ENCODE measurements at regions of chr7 and their contacts with region 1.

Region 1: GRCh38 chr7:86469680-86470295 is 173.9 kb upstream of the GRM3 start:
- H3K4me3 Mint-ChIP-seq: no peak overlapping the region
- H3K27ac Mint-ChIP-seq: no peak overlapping the region
- H3K4me1 Mint-ChIP-seq: no peaks in the 10 kb centered on the region
- H3K27me3 Mint-ChIP-seq: no peaks in the 10 kb centered on the region

Region 2: DNA sequence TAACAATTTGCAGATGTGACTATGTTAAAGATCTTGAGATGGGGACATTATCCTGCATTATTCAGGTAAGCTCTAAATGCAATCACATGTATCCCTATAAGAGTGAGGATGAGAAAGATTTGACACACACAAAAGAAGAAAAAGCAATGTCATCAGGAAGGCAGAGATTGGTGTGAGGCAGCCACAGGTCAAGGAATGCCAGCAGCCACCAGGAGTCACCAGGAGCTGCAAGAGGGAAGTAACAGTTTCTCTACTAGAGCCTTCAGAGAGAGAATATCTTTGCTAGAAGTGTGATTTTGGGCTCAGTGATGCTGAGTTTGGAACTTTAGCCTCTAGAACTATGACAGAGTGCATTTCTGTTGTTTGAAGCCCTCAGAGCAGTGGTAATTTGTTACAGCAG is 582.7 kb before region 1 on chr7:
- intact Hi-C with region 1: loop called (anchors 5 kb)
- H3K4me3 Mint-ChIP-seq: no peak overlapping the region
- H3K27ac Mint-ChIP-seq: no peak overlapping the region
- H3K4me1 Mint-ChIP-seq: no peaks in the 10 kb centered on the region
- H3K27me3 Mint-ChIP-seq: no peaks in the 10 kb centered on the region

Region 3: DNA sequence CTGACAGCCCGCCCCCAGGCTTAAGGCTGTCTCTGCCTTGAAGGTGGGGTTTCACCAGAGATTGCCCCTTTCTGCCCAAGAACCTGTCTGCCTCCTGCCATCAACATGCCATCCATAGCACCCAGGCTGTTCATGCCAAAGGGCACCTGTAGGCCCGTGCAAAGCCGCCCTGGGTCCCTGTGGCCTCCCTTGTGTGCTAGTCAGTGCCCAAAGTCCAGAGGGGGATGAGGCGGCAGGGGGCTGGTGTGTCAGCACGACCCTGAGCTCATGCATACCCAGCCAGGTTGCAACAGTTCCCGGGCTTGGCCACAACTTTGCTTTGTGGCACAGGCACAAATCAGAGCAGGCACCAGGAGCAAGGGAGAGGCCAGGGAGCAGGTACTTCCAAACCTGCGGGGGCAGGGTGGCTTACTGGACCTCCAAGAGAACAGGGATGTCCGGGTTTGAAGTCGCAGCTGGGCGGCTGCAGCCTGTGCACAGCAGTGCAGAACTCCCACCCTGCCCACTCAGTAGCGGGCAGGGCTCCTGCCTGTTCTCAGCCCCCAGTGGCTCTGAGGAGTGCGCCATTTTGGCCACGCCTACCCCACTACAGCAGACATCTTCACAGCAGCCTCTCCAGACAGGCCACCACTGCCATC is 497.2 kb before region 1 on chr7:
- intact Hi-C with region 1: no loop called
- H3K4me3 Mint-ChIP-seq: no peak overlapping the region
- H3K27ac Mint-ChIP-seq: no peak overlapping the region
- H3K4me1 Mint-ChIP-seq: no peaks in the 10 kb centered on the region
- H3K27me3 Mint-ChIP-seq: no peaks in the 10 kb centered on the region